ENCODE measurements at regions of chr16 and their contacts with region 1.

Region 1: GRCh38 chr16:22077700-22078313 is 14.5 kb upstream of the VWA3A start:
- DNase-seq: no peak
- ATAC-seq: peak; percentile 42

Region 2: DNA sequence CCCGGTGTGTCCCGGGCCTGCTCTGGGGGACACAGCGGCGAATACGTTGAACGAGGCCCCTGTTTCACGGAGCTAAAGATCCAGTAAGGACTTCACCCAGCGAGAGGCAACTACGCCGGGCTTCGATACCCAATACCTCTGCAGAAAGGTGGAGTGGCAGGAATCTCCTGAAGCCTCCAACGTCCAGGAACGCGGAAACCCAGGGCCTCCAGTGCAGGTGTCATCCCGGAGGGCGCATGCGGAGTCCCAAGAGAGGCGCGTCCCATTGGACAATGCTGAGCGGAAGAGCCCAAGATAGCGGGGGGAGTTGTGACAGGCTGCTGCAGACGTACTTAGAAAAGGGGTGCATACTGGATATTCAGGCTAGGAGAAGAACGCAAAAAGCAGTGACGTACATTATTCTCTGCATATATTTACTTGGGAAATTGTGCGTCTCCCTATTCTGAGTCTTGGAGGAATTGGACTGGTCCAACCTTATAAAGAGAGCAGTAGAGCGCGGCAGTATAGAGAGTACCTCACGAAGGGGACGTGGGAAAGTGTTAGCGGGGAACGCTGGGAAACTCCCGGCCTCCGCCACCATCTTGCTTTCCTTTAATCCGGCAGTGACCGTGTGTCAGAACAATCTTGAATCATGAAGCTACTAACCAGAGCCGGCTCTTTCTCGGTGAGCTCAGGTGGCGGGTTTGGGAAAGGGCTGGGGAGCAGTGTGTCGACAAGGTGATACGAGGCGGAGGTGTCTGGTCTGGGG is 124.8 kb before region 1 on chr16 and contains the start of gene UQCRC2:
- intact Hi-C with region 1: loop called (anchors 5 kb)
- DNase-seq: peak; percentile 93
- ATAC-seq: peak; percentile 97
- total RNA-seq, gene UQCRC2: 906 TPM

Measured in Right ventricle myocardium inferior (tissue), 1 donor.